H1 (cell line): ENCODE measurements at regions of chr22 and their contacts with region 1.

Region 1: DNA sequence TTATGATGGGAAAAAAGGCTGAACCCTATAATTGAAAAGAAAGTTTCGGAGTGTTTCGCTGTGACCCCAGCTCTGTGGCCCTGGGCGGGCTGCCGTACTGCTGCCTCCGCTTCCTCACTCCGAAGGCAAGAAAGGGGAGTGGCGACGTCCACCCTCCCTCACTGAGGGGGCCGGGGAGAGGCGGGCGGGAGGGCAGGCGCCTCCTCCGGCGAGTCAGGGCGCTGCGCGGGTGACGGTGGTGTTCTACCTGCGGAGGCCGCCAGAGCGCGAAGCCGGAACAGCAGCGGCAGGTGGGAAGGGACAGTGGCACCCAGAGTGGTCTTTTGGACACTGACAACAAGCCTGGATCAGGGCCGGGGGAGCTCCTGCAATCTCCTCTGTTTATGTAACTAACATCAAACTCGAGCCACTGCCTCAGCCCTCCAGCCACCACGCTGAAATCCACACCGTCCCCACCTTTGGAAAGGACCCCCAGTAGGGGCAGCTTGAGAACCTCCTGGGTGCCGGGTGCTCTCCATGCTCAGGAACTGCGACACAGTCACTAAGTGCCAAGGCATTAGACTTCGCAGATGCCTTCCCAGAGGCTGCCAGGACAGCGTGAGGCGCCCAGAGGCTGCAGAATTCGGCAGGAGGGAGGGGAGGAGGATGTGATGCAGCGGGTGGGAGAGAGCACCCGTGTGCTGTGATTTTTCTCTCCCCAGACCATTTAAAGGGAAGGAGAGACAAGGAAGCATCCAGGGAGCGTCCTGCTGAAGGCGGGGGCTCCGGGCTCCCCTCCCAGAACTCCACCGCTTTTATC is 25.5 kb downstream of the BID start:
- DNase-seq: peak; percentile 41 to 81
- H3K4me3 ChIP-seq: no peak overlapping the region
- H3K27ac ChIP-seq: no peak overlapping the region
- H3K4me1 ChIP-seq: peaks cover 0 to 3% (median 0%) of the 10 kb centered on the region in 4 experiments; a peak in 3 of 7 replicates
- H3K27me3 ChIP-seq: no peaks in the 10 kb centered on the region
- CTCF ChIP-seq: peak; percentile 73 to 98 (median 92)
- EP300 ChIP-seq: 0 out of 3 replicates have a peak, but pooled peaks of 1 of the 2 experiments have one; percentile 14
- POLR2A ChIP-seq: no peak
- RAD21 ChIP-seq: peak; percentile 29 to 42

Region 2: DNA sequence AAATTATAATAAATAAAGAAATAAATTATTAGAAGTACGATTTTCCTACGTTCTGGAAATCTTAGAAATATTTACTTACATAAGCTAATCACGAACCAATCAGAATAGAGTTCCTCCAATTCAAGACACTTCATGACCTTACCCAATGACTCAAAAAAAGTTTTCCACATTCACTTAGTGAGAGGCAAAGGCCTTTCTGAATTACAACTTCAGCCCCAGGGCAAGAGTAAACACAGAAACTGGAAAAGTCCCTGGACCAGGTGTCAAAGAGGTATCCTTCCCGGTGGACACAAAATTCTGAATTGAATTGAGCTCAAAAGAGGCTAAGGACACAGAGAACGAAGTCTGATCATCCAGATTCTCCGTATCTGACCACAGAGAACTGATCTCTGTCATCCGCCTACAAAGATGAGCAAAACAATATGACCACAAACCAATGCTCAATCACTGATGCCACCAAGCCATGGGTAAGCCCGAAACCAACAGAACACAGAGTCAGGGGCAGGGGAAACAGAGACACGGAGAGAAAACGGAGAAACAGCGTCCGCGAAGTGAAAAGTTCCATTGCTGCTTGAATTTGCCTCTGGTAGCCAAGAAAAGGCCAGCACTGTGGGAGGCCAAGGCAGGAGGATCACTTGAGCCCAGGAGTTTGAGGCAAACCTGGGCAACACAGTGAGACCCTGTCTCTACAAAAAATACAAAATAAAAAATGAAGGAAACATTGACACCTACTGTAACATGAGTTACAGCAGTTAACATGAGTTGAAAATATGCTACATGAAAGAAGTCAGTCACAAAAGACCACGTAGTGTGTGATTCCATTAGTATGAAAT is 18.7 kb after region 1 on chr22:
- CTCF ChIA-PET with region 1: interaction called, 36 read pairs
- POLR2A ChIA-PET with region 1: interaction called, 13 read pairs
- DNase-seq: no peak
- H3K4me3 ChIP-seq: no peak overlapping the region
- H3K27ac ChIP-seq: no peak overlapping the region
- H3K4me1 ChIP-seq: peaks cover 2 to 6% (median 2%) of the 10 kb centered on the region in 4 experiments; a peak in 4 of 7 replicates
- H3K27me3 ChIP-seq: no peaks in the 10 kb centered on the region
- CTCF ChIP-seq: no peak
- EP300 ChIP-seq: no peak
- POLR2A ChIP-seq: no peak
- RAD21 ChIP-seq: no peak